ENCODE measurements at regions of chr5 and their contacts with region 1.

Region 1: DNA sequence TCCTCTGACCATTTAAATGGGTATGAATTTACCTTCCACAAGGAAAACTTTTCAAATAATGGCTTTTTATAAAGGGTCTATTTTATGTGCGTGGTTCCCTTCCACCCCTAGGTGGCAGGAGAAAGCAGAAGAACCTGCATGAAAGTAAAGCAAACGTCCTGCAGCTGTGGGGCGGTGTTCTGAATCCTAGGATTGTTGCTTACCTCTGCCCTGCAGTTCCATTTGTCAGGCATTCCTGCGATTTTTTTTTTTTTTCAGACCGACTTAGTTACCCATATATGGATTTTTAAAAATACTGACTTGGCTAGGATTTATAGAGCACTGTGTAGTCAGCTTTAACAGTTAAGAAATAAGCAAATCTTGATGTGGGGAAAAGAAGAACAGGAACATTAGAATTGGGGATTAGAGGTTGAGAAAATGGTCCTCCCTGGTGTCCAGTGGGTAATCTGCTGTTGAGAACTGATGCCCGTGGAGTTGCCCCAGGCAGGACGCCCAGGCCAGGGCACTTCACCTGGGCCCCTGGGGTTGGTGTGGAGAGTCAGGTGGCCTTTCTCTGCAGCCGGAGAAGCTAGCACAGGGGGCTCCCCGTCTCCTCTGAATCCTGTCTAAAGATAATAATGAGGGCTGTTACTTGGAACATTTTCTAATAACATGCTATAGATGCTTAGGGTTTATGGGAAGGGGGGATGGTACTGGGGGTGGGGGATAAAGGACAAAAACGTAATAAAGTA is 30.4 kb upstream of the LTC4S start:
- DNase-seq: no peak
- ATAC-seq: peak; percentile 87
- H3K4me3 ChIP-seq: no peak overlapping the region
- H3K27ac ChIP-seq: no peak overlapping the region
- H3K4me1 ChIP-seq: peaks cover 30% of the 10 kb centered on the region
- H3K27me3 ChIP-seq: no peaks in the 10 kb centered on the region
- CTCF ChIP-seq: peak; percentile 82 to 94 (median 90)
- EP300 ChIP-seq: no peak
- POLR2A ChIP-seq: no peak
- RAD21 ChIP-seq: peak; percentile 79

Region 2: GRCh38 chr5:178677429-178677828 is 1086.0 kb before region 1 on chr5:
- CTCF ChIA-PET with region 1: no interaction called
- POLR2A ChIA-PET with region 1: no interaction called
- RAD21 ChIA-PET with region 1: no interaction called
- SMC1A ChIA-PET with region 1: no interaction called
- in situ Hi-C with region 1: no loop called
- intact Hi-C with region 1: no loop called
- DNase-seq: no peak
- ATAC-seq: no peak
- H3K4me3 ChIP-seq: no peak overlapping the region
- H3K27ac ChIP-seq: no peak overlapping the region
- H3K4me1 ChIP-seq: no peaks in the 10 kb centered on the region
- H3K27me3 ChIP-seq: no peaks in the 10 kb centered on the region
- CTCF ChIP-seq: no peak
- EP300 ChIP-seq: no peak
- POLR2A ChIP-seq: no peak
- RAD21 ChIP-seq: no peak

Region 3: DNA sequence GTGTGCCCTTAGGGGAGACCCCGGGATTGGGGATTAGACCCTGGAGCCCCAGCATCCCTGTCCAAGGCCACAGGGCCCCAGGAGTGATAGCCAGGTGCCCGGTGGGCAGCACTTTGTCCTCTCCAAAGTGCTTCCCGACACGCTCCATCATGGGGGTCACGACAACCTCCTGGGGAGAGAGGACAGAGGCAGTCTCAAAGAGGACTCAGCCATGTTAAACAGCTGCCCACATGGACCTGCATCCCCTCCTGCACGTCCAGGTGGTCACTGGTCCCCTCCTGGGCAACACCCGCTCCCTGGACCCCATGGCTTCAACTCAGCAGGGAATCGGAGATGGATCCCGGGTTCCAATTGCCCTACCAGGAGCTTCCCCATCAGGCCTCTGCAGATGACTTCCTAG is 119.8 kb before region 1 on chr5:
- CTCF ChIA-PET with region 1: no interaction called
- POLR2A ChIA-PET with region 1: no interaction called
- RAD21 ChIA-PET with region 1: no interaction called
- SMC1A ChIA-PET with region 1: no interaction called
- in situ Hi-C with region 1: no loop called
- intact Hi-C with region 1: no loop called
- DNase-seq: no peak
- ATAC-seq: no peak
- H3K4me3 ChIP-seq: no peak overlapping the region
- H3K27ac ChIP-seq: no peak overlapping the region
- H3K4me1 ChIP-seq: no peaks in the 10 kb centered on the region
- H3K27me3 ChIP-seq: no peaks in the 10 kb centered on the region
- CTCF ChIP-seq: no peak
- EP300 ChIP-seq: no peak
- POLR2A ChIP-seq: no peak
- RAD21 ChIP-seq: no peak

Region 4: DNA sequence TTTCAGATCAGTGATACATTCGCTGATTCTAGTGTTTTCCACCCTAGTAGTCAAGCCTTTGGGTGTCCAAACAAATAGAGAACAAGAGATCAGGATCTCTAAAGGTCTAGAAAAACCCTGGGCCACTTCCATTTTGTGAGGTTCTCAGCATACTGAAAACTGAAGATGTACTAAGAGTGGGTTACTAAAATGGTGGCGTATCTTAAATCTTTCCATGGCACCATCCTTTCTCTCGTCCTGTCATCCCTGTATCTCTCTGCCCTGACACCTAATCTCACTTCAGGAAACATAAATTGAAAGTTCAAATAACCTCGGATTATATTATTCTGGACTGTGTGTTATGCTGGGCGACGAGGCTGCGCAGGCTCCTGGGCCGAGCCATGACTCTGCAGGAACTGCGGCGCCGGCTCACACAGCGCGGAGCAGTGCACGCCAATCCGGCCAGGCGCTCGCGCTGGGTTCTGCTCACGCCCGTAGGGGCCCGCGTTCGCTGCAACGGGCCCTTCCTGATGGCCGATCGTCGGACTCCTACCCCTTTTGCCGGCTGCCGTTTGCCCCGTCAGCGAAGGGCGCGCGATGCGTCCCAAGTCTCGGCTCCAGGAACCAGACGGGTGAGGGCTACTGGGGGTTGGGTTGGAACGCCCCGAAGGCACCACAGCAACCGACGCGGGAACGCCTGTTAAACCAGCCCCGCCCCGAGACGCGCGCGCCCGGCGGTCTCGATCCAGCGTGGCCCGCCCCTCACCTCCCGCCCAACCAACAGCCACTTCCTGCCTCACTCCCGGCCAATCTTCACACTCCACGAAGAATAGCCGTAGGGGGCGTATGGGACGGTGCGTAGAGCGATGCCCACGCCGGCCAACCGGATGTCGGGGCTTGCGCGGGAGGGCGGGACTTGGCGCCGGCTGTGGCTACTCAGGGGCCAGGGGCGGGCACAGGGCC is 65.1 kb before region 1 on chr5:
- CTCF ChIA-PET with region 1: no interaction called
- POLR2A ChIA-PET with region 1: interaction called, 14 read pairs
- RAD21 ChIA-PET with region 1: interaction called, 3 read pairs
- SMC1A ChIA-PET with region 1: no interaction called
- in situ Hi-C with region 1: no loop called
- intact Hi-C with region 1: no loop called
- DNase-seq: peak; percentile 96
- ATAC-seq: peak; percentile 93
- H3K4me3 ChIP-seq: peak overlapping the region; percentile 72
- H3K27ac ChIP-seq: peak overlapping the region; percentile 98
- H3K4me1 ChIP-seq: peaks cover 14% of the 10 kb centered on the region
- H3K27me3 ChIP-seq: no peaks in the 10 kb centered on the region
- CTCF ChIP-seq: no peak
- EP300 ChIP-seq: 0 out of 4 replicates have a peak, but pooled peaks of 1 of the 2 experiments have one; percentile 27
- POLR2A ChIP-seq: peak; percentile 90
- RAD21 ChIP-seq: no peak

Region 5: GRCh38 chr5:179738742-179739141 is 24.6 kb before region 1 on chr5:
- CTCF ChIA-PET with region 1: interaction called, 25 read pairs
- POLR2A ChIA-PET with region 1: interaction called, 3 read pairs
- RAD21 ChIA-PET with region 1: interaction called, 7 read pairs
- SMC1A ChIA-PET with region 1: interaction called, 3 read pairs
- in situ Hi-C with region 1: no loop called
- intact Hi-C with region 1: no loop called
- DNase-seq: no peak
- ATAC-seq: no peak
- H3K4me3 ChIP-seq: 0 out of 2 replicates have a peak overlapping the region, but pooled peaks have one; percentile 8
- H3K27ac ChIP-seq: no peak overlapping the region
- H3K4me1 ChIP-seq: peaks cover 3% of the 10 kb centered on the region; the same call in 1 of the 2 replicates
- H3K27me3 ChIP-seq: no peaks in the 10 kb centered on the region
- CTCF ChIP-seq: no peak
- EP300 ChIP-seq: no peak
- POLR2A ChIP-seq: no peak
- RAD21 ChIP-seq: no peak

Region 6: GRCh38 chr5:179795863-179796833 is 32.8 kb after region 1 on chr5:
- CTCF ChIA-PET with region 1: interaction called, 16 read pairs
- POLR2A ChIA-PET with region 1: interaction called, 6 read pairs
- RAD21 ChIA-PET with region 1: interaction called, 8 read pairs
- SMC1A ChIA-PET with region 1: interaction called, 4 read pairs
- in situ Hi-C with region 1: no loop called
- intact Hi-C with region 1: loop called (anchors 5 kb)
- DNase-seq: peak; percentile 31
- ATAC-seq: peak; percentile 87
- H3K4me3 ChIP-seq: peak overlapping the region; percentile 75
- H3K27ac ChIP-seq: peak overlapping the region; percentile 62; the same call in 1 of the 2 replicates
- H3K4me1 ChIP-seq: peaks cover 23% of the 10 kb centered on the region
- H3K27me3 ChIP-seq: no peaks in the 10 kb centered on the region
- CTCF ChIP-seq: peak; percentile 57 to 85 (median 60); a peak in 4 of 6 replicates
- EP300 ChIP-seq: peak in 1 of 2 experiments; percentile 44; a peak in 1 of 4 replicates
- POLR2A ChIP-seq: peak; percentile 66
- RAD21 ChIP-seq: peak; percentile 39